ENCODE measurements at regions of chrX and their contacts with region 1.

Region 1: GRCh38 chrX:135707880-135708279 is 5.6 kb upstream of the CT45A1 start:
- DNase-seq: peak; percentile 83
- ATAC-seq: peak; percentile 100
- H3K4me3 Mint-ChIP-seq: no peak overlapping the region
- H3K27ac Mint-ChIP-seq: no peak overlapping the region
- H3K4me1 Mint-ChIP-seq: no peaks in the 10 kb centered on the region
- H3K27me3 Mint-ChIP-seq: no peaks in the 10 kb centered on the region
- CTCF ChIP-seq: peak; percentile 51

Region 2: GRCh38 chrX:135688137-135688536 is 19.7 kb before region 1 on chrX:
- CTCF ChIA-PET with region 1: no interaction called
- POLR2A ChIA-PET with region 1: no interaction called
- DNase-seq: peak; percentile 57
- ATAC-seq: peak; percentile 92
- H3K4me3 Mint-ChIP-seq: no peak overlapping the region
- H3K27ac Mint-ChIP-seq: no peak overlapping the region
- H3K4me1 Mint-ChIP-seq: no peaks in the 10 kb centered on the region
- H3K27me3 Mint-ChIP-seq: peaks cover 5% of the 10 kb centered on the region; the same call in 1 of the 2 replicates
- CTCF ChIP-seq: no peak

Region 3: GRCh38 chrX:135740683-135741149 is 32.8 kb after region 1 on chrX:
- CTCF ChIA-PET with region 1: interaction called, 10 read pairs
- POLR2A ChIA-PET with region 1: no interaction called
- DNase-seq: peak; percentile 73
- ATAC-seq: peak; percentile 97
- H3K4me3 Mint-ChIP-seq: no peak overlapping the region
- H3K27ac Mint-ChIP-seq: no peak overlapping the region
- H3K4me1 Mint-ChIP-seq: no peaks in the 10 kb centered on the region
- H3K27me3 Mint-ChIP-seq: no peaks in the 10 kb centered on the region
- CTCF ChIP-seq: peak; percentile 39; the same call in 1 of the 2 replicates